Right ventricle myocardium inferior (tissue), 1 donor: ENCODE measurements at regions of chr14 and their contacts with region 1.

Region 1: DNA sequence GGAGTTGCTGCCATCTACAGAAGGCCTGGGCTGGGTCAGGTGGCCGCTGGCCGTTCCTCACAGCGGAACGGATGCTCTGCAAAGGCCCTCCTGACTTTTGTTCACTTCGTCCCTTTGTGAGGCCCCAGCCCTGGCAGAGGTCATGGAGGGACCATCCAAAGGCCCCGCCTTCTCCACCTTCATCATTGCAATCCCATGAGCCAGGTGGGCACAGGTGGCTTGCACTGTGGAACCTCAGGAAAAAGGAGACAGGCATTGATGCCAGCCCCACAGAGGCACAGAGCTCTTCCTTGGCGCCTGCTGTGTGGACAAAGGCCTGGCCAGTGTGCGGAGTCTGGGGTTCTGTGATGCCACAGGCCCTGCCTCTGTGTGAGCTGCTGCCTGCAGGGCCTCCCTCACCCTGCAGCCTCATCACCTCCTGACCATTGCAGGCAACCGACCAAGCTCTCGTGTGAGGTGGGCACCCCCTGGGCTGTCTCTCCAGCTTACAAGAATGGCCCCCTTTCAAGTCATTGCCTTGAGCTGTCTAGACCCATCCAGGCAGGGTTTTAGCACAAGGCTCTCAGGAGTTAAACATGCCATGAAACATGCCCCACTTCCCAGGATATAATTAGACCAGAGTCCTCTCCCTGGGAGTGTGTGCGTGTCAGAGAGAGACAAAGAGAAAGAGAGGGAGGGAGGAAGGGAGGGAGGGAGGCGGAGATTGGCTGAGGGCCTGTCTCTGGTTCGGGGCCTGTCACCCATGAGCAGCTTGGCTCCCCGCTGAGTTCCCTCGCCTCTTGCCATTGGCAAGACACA is 19.3 kb downstream of the NFKBIA start:
- DNase-seq: peak; percentile 84
- ATAC-seq: peak; percentile 94

Region 2: GRCh38 chr14:35292051-35292769 is 93.0 kb before region 1 on chr14 and contains the start of gene PSMA6:
- intact Hi-C with region 1: loop called (anchors 5 kb)
- DNase-seq: peak; percentile 100
- ATAC-seq: peak; percentile 100
- total RNA-seq, gene PSMA6: 195 TPM

Region 3: GRCh38 chr14:35425850-35426249 is 40.6 kb after region 1 on chr14:
- intact Hi-C with region 1: no loop called
- DNase-seq: no peak
- ATAC-seq: no peak